ENCODE measurements at regions of chr9 and their contacts with region 1.

Region 1: DNA sequence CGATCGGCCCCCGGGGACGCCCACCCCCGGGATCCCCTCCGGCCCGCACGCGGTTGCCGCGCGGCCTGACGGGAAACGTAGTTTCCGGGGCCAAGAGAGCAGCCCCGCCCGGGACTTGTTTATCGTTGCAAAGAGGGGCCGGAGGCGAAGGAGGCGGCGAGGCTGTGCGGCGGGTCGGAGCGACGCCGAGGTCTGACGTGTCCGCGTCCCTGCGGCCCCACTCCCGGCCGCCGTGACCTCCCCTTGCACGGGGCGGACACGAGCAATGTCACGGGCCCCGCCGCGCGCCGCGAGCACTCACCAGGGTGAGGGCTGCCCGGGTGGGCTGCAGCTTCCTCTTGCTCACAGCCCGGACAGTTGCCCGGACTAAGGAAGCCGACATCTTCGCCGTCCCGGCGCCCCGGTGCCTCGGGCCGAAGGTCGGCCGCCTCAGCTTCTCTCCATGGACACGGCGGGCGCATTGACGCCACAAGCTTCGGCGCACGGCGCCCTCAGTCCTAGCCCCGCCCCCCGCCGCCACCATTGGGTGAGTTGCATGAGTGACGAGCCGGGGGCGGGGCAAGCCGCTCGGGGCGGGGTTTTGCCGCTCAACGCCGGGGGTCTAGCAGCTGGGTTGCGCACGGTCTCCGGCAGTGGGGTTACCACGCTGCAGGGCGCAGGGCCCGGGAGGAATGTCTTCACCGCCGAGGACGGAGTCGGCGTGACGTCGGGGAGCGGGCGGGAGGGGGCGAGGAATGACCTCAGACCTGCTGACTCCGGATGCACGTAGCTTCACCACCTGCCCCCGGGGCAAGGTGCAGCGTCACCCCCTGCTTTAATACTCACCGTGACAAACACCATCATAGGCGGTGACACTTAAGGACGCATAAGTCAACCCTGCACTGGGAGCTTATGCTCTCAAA is at the start of gene ISCA1:
- DNase-seq: peak; percentile 90
- H3K4me3 ChIP-seq: peak within 1 kb of the TSS; percentile 47 to 84 (median 76)
- H3K27ac ChIP-seq: peak within 1 kb of the TSS; percentile 88
- H3K4me1 ChIP-seq: peaks cover 11% of the 10 kb centered on the region
- H3K27me3 ChIP-seq: no peaks in the 10 kb centered on the region
- CTCF ChIP-seq: no peak
- POLR2A ChIP-seq: peak; percentile 83
- total RNA-seq, gene ISCA1: 20.6 and 22.2 TPM in 2 replicates

Region 2: GRCh38 chr9:86098824-86099700 is 183.3 kb before region 1 on chr9 and contains the start of gene GOLM1:
- CTCF ChIA-PET with region 1: no interaction called
- POLR2A ChIA-PET with region 1: no interaction called
- dilution Hi-C with region 1: no loop called
- intact Hi-C with region 1: loop called (anchors 5 kb)
- DNase-seq: peak; percentile 58
- H3K4me3 ChIP-seq: peak within 1 kb of the TSS; percentile 63 to 88 (median 69)
- H3K27ac ChIP-seq: peak within 1 kb of the TSS; percentile 65
- H3K4me1 ChIP-seq: peaks cover 20% of the 10 kb centered on the region
- H3K27me3 ChIP-seq: no peaks in the 10 kb centered on the region
- CTCF ChIP-seq: peak in 1 of 2 donors; percentile 26
- POLR2A ChIP-seq: peak; percentile 43
- total RNA-seq, gene GOLM1: 94.9 and 108 TPM in 2 replicates